Pancreas (tissue), 10 donors: ENCODE measurements at regions of chr11 and their contacts with region 1.

Region 1: GRCh38 chr11:69094111-69094914 is 45.6 kb downstream of the TPCN2 start:
- DNase-seq: peak in 2 of 6 donors; percentile 35 to 77
- ATAC-seq: peak in 1 of 4 donors; percentile 5
- H3K4me3 ChIP-seq: no peak overlapping the region
- H3K27ac ChIP-seq: no peak overlapping the region
- H3K4me1 ChIP-seq: no peaks in the 10 kb centered on the region
- H3K27me3 ChIP-seq: no peaks in the 10 kb centered on the region
- CTCF ChIP-seq: no peak

Region 2: DNA sequence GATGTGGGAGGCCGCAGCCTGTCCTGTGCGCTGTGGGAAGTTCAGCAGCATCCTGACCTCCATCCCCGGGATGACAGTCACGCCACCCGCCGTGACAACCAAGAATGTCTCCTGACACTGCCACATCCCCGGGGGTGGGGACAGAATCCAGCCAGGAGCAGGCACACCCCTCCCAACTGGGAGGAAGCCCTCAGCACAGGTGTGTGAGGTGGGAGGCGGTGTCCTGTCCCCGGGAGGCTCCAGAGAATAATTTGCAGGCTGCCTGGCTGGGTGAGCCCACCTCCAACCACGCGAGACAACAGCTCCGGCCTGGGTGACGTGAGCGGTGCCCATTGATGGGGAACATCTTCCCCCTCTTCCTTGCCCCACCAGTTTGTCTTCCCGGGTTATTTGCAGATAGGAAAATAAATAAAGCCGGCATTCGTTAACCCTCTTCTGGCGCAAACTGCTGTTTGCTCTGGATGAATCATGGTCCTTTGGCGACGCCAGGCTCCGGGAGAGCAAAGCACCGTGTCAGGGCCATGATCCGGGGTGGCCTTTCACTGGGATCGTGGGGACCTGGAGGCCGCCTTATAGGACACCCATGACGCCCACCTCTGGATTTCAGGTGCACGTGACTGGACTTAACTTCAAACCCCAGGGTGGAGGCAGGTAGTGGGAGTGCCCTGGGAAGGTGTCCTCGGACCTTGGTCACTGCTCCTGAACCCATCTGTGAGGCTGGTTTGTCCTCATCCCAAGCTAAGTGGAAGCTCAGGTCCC is 560.4 kb after region 1 on chr11:
- intact Hi-C with region 1: loop called in 2 of 3 experiments (anchors 5 to 10 kb)
- DNase-seq: peak in 3 of 6 donors; percentile 49 to 77 (median 56)
- ATAC-seq: peak; percentile 35 to 69 (median 64)
- H3K4me3 ChIP-seq: no peak overlapping the region
- H3K27ac ChIP-seq: peak overlapping the region in 1 of 4 donors; percentile 37
- H3K4me1 ChIP-seq: no peaks in the 10 kb centered on the region
- H3K27me3 ChIP-seq: no peaks in the 10 kb centered on the region
- CTCF ChIP-seq: no peak